ENCODE measurements at regions of chr3 and their contacts with region 1.

Region 1: DNA sequence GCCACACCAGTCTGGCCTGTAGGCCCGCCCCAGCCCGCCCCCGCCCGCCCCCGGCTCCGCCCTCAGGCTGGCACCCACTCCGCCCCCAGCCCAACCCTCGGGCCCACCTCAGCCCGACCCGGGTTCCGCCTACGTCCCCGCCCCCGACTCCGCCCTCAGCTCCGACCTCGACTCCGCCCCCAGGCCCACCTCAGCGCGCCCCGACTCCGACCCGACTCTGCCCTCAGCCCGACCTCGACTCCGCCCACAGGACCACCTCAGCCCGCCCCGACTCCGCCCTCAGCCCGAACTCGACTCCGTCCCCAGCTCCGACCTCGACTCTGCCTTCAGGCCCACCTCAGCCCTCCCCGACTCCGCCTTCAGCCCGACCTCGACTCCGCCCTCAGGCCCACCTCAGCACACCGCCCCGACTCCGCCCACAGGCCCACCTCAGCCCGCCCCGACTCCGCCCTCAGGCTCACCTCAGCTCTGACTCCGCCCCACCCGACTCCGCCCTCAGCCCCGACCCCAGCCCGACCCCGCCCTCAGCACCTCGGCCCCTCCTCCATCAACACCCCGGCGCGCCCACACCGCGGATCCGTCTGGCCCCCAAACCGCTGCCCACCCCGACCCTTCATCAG is at the start of gene RAB43:
- DNase-seq: peak; percentile 82
- H3K4me3 ChIP-seq: peak within 1 kb of the TSS; percentile 53
- H3K27ac ChIP-seq: peak within 1 kb of the TSS; percentile 74
- H3K4me1 ChIP-seq: peaks cover 4% of the 10 kb centered on the region
- H3K27me3 ChIP-seq: no peaks in the 10 kb centered on the region
- CTCF ChIP-seq: no peak
- total RNA-seq, gene RAB43: 2.9 and 7.3 TPM in 2 replicates

Region 2: GRCh38 chr3:128698211-128699064 is 423.5 kb before region 1 on chr3:
- CTCF ChIA-PET with region 1: no interaction called
- POLR2A ChIA-PET with region 1: no interaction called
- intact Hi-C with region 1: no loop called
- DNase-seq: peak; percentile 50
- H3K4me3 ChIP-seq: peak overlapping the region; percentile 48
- H3K27ac ChIP-seq: no peak overlapping the region
- H3K4me1 ChIP-seq: no peaks in the 10 kb centered on the region
- H3K27me3 ChIP-seq: no peaks in the 10 kb centered on the region
- CTCF ChIP-seq: no peak

Region 3: DNA sequence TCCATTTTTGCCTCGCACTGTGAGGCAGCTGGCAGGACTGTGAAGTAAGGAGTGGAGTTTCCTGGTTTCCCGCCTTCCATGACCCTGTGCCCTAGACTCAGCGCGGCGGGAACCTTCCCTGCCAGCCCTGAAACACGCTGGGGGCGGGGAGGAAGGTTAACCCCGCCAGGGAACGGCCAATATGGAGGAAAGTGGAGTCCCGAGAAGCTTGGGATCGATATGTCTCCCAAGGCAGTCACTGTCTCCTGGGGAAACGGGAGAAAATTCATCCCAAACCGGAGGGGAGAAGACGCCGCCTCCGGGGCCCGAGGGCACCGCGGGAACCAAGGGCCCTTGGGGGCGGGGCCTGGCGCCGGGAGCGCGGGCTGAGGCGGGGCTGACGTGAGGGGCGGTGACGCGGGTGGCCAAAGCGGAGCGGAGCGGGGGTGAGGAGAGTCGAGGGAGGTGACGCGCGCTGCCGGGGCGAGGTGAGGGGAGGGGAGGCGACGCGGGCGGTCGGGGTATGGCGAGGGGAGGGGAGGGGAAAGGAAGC is 156.6 kb after region 1 on chr3 and contains the start of gene HMCES:
- CTCF ChIA-PET with region 1: no interaction called
- POLR2A ChIA-PET with region 1: interaction called, 13 read pairs
- intact Hi-C with region 1: no loop called
- DNase-seq: peak; percentile 93
- H3K4me3 ChIP-seq: peak within 1 kb of the TSS; percentile 93
- H3K27ac ChIP-seq: peak within 1 kb of the TSS; percentile 84
- H3K4me1 ChIP-seq: peaks cover 17% of the 10 kb centered on the region
- H3K27me3 ChIP-seq: no peaks in the 10 kb centered on the region
- CTCF ChIP-seq: no peak
- total RNA-seq, gene HMCES: 46.3 and 52.2 TPM in 2 replicates

Region 4: DNA sequence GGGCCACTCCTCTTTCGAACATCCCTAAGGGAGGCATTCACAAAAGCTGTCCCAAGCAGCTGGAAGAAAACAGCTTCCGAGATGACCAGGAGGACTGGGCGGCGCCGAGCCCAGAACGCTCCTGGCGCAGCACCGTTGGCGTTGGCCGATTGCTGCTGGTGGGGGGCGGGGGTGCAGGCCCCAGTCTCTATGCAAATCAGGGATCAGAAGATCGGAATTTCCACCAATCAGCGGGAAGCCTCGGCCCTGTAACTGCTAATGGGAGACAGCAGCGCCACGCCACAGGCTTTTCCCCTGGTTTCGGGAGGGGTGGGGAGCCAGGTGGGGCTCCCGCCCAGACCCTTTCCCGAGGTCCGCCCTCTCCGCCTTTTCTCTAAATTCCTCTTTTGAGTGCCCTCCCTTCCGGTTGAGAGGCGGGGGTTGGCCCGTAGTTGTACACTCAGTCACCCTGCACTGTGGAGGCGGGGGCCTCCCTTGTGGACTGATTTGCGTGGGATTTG is 183.7 kb after region 1 on chr3:
- CTCF ChIA-PET with region 1: no interaction called
- POLR2A ChIA-PET with region 1: no interaction called
- intact Hi-C with region 1: no loop called
- DNase-seq: peak; percentile 92
- H3K4me3 ChIP-seq: no peak overlapping the region
- H3K27ac ChIP-seq: peak overlapping the region; percentile 4
- H3K4me1 ChIP-seq: peaks cover 13% of the 10 kb centered on the region
- H3K27me3 ChIP-seq: no peaks in the 10 kb centered on the region
- CTCF ChIP-seq: no peak

Measured in A673 (cell line).